ENCODE measurements at regions of chr2 and their contacts with region 1.

Region 1: GRCh38 chr2:106065268-106065982 is 128.7 kb downstream of the UXS1 start:
- DNase-seq: peak; percentile 46 to 55
- H3K4me3 ChIP-seq: peak overlapping the region; percentile 2 to 69 (median 50)
- H3K27ac ChIP-seq: peak overlapping the region in 2 of 3 donors; percentile 20 to 46
- H3K4me1 ChIP-seq: peaks cover 10 to 18% of the 10 kb centered on the region in 2 donors
- H3K27me3 ChIP-seq: no peaks in the 10 kb centered on the region
- CTCF ChIP-seq: no peak
- POLR2A ChIP-seq: peak in 1 of 2 donors; percentile 23

Region 2: DNA sequence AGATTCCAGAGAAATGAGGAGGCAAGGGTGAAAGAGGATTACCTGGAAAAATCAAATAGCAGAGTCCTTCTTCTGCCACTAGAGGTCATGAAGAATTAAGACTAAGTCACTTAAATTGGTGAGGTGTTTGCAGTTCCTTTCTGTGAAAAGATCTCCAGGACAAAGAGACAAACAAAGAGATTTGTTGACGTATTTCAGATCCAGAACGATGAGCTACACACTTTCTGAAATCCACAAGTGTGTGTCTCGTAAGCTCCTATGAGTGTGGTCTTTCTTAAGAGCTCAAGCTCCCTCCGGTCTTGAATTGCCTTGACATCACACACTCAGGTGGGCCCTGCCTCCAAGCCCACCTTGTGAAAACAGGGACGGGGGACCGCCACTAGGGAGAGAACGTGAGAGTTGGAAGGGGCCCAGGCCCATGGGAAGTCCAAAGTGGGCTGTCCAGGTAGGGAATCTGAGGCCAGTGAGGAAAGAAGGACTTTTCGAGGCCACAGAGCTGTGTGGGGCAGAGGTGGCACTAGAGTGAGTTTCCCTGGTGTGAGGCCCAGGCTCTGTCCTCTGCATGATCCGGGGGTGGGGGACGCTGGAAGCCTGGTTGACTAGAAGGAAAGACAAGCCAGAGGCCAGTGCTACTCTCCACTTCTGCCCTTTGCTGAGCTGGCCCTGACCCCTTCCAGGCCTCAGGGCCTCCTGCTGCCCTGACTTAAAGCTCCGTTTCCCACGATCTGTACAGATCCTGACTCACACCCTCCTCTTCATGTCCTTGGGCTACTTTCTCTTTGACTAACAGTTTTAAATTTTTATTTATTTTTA is 488.8 kb before region 1 on chr2:
- intact Hi-C with region 1: loop called (anchors 10 kb)
- DNase-seq: no peak
- H3K4me3 ChIP-seq: no peak overlapping the region
- H3K27ac ChIP-seq: peak overlapping the region in 1 of 3 donors; percentile 42
- H3K4me1 ChIP-seq: peaks cover 4 to 7% of the 10 kb centered on the region in 2 donors
- H3K27me3 ChIP-seq: no peaks in the 10 kb centered on the region
- CTCF ChIP-seq: peak in 5 of 6 experiments; percentile 43 to 82 (median 62)
- POLR2A ChIP-seq: no peak